ENCODE measurements at regions of chr16 and their contacts with region 1.

Region 1: DNA sequence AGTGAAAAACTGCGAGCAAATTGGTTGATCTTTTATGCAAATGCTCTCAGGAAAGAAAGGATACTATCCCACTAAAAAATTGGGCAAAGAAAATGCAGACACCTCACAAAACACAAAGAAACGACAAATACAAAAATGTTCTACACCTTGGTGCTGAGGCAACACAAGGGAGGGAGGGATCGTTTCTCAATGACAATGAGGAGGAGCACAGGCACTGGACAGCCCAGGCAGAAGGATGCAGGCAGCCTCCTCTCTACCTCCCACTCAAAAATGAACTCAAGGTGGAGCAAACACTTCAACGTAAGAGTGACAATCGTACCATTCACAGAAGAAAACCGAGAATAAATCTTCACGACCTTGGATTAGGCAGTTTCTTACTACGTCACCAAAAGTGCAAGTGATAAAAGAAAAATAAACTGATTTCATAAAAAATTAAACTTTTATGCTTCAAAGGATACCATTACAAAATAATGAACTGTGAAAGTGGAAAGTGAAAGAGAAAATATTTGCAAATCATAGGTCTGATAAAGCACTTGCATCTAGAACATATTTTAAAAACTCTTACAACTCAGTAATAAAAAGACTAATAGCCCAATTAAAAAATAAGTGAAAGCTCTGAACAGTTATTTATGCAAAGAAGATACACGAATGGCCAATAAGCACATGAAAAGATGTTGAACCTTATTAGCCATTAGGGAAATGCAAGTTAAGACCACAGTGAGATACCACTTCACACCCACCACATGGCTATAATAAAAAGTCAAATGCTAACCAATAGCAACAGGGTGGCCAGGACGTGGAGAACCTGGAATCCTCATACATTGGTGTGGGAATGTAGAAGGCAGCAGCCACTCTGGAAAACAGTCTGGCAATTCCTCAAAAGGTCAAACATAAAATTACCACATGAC is 80.8 kb upstream of the TRAP1 start:
- DNase-seq: no peak
- H3K4me3 ChIP-seq: no peak overlapping the region
- H3K27ac ChIP-seq: no peak overlapping the region
- H3K4me1 ChIP-seq: peaks cover 18% of the 10 kb centered on the region
- CTCF ChIP-seq: no peak; the same call in 1 of the 2 replicates

Region 2: GRCh38 chr16:3868556-3868955 is 70.4 kb after region 1 on chr16:
- CTCF ChIA-PET with region 1: no interaction called
- POLR2A ChIA-PET with region 1: no interaction called
- intact Hi-C with region 1: loop called (anchors 5 kb)
- DNase-seq: no peak
- H3K4me3 ChIP-seq: no peak overlapping the region
- H3K27ac ChIP-seq: no peak overlapping the region
- H3K4me1 ChIP-seq: peaks cover 16% of the 10 kb centered on the region
- CTCF ChIP-seq: no peak

Measured in OCI-LY7 (cell line).